ENCODE measurements at regions of chr15 and their contacts with region 1.

Region 1: GRCh38 chr15:62847900-62848489 is 194.6 kb upstream of the TPM1 start:
- DNase-seq: peak; percentile 85
- H3K4me3 Mint-ChIP-seq: no peak overlapping the region
- H3K27ac Mint-ChIP-seq: peak overlapping the region; percentile 76
- H3K4me1 Mint-ChIP-seq: peaks cover 85% of the 10 kb centered on the region
- H3K27me3 Mint-ChIP-seq: no peaks in the 10 kb centered on the region
- CTCF ChIP-seq: peak; percentile 69

Region 2: GRCh38 chr15:62886431-62887071 is 38.6 kb after region 1 on chr15:
- CTCF ChIA-PET with region 1: interaction called, 6 read pairs
- intact Hi-C with region 1: loop called (anchors 2 kb)
- DNase-seq: peak; percentile 59
- H3K4me3 Mint-ChIP-seq: peak overlapping the region; percentile 57
- H3K27ac Mint-ChIP-seq: peak overlapping the region; percentile 92
- H3K4me1 Mint-ChIP-seq: peaks cover 61% of the 10 kb centered on the region
- H3K27me3 Mint-ChIP-seq: no peaks in the 10 kb centered on the region
- CTCF ChIP-seq: no peak

Region 3: DNA sequence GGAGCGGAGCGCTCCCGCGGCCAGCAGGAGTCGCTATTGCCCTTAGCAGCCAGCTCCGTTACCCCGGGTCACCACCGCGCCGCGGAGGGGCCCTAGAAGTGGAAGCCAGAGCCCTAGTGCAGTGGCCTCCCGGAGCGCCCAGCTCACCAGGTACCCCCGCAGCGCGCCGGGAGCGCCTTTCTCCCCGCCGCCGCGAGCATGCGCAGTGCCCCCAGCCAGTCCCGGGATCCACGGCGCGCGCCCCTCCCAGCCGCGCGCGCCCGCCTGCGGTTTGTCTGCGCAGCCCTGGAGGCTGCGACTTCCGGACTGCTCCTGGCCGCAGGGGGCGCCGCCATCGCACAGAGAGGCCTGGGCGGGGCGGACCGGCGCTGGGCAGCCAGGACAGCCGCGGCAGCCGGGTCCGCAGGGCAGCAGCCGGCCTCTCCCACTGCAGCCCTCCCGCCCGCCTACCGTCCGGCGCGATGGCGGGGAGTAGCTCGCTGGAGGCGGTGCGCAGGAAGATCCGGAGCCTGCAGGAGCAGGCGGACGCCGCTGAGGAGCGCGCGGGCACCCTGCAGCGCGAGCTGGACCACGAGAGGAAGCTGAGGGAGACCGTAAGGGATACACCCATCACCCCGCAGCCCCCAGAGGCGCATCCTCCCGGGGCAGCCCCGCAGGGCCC is 200.2 kb after region 1 on chr15:
- CTCF ChIA-PET with region 1: interaction called, 8 read pairs
- intact Hi-C with region 1: loop called (anchors 2 kb)
- DNase-seq: peak; percentile 99
- H3K4me3 Mint-ChIP-seq: peak overlapping the region; percentile 98
- H3K27ac Mint-ChIP-seq: peak overlapping the region; percentile 77
- H3K4me1 Mint-ChIP-seq: peaks cover 76% of the 10 kb centered on the region
- H3K27me3 Mint-ChIP-seq: no peaks in the 10 kb centered on the region
- CTCF ChIP-seq: peak; percentile 91

Region 4: DNA sequence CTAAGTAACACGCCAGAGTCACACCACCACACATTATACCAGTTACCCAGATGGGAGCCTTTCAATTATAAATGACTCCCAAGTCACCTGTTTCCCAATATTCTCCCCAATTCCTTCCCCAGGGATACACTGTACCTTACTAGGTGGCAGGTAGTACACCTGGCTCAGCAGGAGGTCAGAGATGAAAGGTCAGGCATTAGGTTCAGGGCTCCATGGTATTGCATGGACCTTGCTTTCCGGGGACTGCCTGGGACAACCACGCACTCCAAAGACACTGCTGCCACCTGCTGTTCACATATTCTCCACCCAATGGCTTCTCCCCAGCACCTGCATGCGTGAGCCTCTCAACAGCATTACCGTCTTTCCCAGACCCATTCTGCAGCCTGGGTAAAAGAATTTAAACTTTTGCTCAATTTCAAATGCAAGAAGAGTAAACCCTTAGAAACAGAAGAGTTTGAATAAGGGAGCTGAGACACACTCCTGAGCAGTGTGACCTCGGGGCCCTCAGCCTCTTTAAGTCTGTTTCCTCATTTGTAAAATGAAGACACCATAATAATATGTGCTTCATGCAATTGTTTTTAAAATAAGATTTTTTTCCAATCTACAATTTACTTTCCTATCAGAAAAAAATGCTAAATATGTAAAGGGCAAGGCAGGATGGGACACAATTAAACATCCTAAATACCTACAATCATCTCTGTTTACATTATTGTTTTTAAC is 245.7 kb after region 1 on chr15:
- CTCF ChIA-PET with region 1: no interaction called
- intact Hi-C with region 1: loop called (anchors 5 kb)
- DNase-seq: peak; percentile 89
- H3K4me3 Mint-ChIP-seq: no peak overlapping the region
- H3K27ac Mint-ChIP-seq: no peak overlapping the region
- H3K4me1 Mint-ChIP-seq: peaks cover 8% of the 10 kb centered on the region
- H3K27me3 Mint-ChIP-seq: no peaks in the 10 kb centered on the region
- CTCF ChIP-seq: peak; percentile 94

Measured in Calu3 (cell line).